Activated T-helper 1 cell treated with anti-CD3 and anti-CD28 coated beads, Interleukin-12 subunit alpha, Interleukin-12 subunit beta, Interleukin-2, Interleukin-4 antibody, amounts not matched to agents 30 ng/mL and 10 ng/mL and 1 ng/mL, durations not matched to agents 14 hours and 24 hours and 36 hours (primary cell): ENCODE measurements at regions of chr9 and their contacts with region 1.

Region 1: GRCh38 chr9:93159601-93160471 is 24.1 kb upstream of the WNK2 start:
- DNase-seq: peak; percentile 67
- H3K4me3 Mint-ChIP-seq: no peak overlapping the region
- H3K27ac Mint-ChIP-seq: no peak overlapping the region
- H3K4me1 Mint-ChIP-seq: peaks cover 25% of the 10 kb centered on the region
- H3K27me3 Mint-ChIP-seq: no peaks in the 10 kb centered on the region

Region 2: DNA sequence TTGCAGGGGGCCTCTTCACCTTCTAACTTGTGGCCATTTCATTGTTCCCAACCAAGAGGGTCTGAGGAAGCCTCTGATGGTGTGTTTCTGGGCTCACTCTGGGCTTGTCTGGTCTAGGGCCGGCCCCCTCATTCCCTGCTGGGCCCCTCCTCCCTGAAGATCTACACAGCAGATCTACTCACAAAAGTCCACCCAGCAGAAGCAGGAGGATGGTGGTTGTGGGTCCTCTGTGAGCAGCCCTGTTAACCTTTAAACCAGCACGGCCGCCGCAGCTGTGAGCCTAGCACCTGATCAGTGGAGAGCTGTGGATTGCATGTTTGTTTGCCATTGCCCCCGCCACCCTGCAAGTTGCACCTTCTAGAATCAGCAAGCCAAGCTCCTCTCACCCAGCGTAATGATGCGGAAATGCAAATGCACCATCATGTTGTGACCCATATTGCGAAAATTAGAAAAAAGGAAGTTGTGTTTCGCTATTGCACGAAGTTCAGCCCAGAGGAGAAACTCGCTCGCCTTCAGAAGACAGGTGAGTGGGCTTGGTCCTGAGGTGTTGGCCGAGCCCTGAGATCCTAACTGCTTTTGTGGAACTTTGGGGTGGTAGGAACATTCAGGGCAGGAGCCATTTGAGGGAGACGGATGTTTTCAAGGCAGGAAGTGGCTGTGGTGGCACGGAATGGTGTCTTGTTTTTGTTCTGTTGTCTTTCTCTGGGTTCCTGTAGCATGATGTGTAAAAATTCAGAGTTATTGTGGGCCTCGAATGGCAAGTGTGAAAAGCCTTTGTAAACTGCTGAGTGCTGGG is 195.8 kb before region 1 on chr9:
- intact Hi-C with region 1: loop called (anchors 5 kb)
- DNase-seq: peak; percentile 77
- H3K4me3 Mint-ChIP-seq: peak overlapping the region; percentile 98
- H3K27ac Mint-ChIP-seq: peak overlapping the region; percentile 97
- H3K4me1 Mint-ChIP-seq: peaks cover 69% of the 10 kb centered on the region
- H3K27me3 Mint-ChIP-seq: no peaks in the 10 kb centered on the region

Region 3: DNA sequence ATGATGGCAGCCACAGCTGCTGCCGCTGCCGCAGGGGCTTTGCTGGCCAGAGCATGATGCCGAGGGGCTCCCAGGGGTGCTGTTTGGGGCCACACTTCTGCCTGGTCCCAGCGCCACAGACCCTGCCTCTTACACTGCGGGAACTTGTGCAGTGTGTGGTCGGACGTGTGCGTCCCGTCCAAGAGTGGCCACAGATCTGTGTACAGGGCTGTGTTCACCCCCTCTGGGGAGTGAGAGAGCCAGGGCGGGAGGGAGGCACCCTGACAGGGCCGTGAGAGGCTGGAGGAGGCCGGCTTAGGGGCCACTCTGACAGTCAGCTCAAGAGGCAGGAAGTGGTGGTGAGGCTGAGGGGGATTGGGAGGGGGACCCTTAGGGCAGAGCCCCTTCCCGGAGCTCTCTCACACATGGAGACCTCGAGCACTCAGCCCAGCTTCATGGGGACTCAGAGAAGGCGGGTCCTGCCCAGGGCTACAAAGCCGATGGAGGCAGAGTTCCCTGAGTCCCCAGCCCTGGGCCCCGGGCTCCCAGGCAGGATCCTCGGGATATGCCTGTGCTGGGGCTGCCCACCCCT is 76.9 kb before region 1 on chr9:
- intact Hi-C with region 1: no loop called
- DNase-seq: no peak
- H3K4me3 Mint-ChIP-seq: no peak overlapping the region
- H3K27ac Mint-ChIP-seq: peak overlapping the region; percentile 58
- H3K4me1 Mint-ChIP-seq: peaks cover 26% of the 10 kb centered on the region
- H3K27me3 Mint-ChIP-seq: no peaks in the 10 kb centered on the region

Region 4: DNA sequence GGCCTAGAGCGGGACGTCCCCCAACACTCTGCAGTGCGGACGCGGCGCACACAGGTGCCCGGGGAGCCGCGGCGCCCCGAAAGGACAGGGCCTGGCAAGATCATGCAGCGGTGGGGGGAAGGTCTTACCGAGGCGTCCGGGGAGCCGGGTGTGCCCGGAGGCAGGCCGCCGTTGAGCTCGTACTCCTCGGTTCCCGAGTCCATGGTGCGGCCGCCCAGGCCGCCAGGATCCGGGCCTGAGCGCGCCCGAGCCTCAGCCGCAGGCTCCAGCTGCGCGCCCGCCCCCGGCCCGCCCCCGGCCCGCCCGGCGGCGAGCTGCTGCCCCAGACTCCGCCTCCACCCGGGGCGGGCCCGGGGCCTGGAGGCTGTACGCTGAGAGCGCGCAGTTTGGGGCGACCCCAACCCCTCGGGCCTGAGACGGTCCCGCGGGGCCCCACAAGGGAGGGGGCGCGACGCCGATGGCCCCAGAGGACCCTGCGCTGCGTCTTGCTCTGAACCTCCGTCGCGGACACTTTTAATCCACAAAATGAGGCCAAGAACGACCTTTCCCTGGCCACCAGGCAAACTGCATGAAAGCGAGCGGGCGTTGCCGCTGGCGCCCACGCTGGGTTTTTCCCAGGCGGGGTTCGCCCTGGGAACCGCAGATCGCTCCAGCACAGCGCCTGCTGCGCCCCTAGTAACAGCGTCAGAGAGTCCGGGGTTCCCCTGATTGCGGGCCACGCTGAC is 25.7 kb before region 1 on chr9 and contains the start of gene NINJ1:
- intact Hi-C with region 1: loop called (anchors 1 kb)
- DNase-seq: peak; percentile 89
- H3K4me3 Mint-ChIP-seq: peak within 1 kb of the TSS; percentile 94
- H3K27ac Mint-ChIP-seq: peak within 1 kb of the TSS; percentile 96
- H3K4me1 Mint-ChIP-seq: peaks cover 57% of the 10 kb centered on the region
- H3K27me3 Mint-ChIP-seq: peaks cover 2% of the 10 kb centered on the region
- total RNA-seq, gene NINJ1: 94.2 and 95.3 TPM in 2 replicates

Region 5: DNA sequence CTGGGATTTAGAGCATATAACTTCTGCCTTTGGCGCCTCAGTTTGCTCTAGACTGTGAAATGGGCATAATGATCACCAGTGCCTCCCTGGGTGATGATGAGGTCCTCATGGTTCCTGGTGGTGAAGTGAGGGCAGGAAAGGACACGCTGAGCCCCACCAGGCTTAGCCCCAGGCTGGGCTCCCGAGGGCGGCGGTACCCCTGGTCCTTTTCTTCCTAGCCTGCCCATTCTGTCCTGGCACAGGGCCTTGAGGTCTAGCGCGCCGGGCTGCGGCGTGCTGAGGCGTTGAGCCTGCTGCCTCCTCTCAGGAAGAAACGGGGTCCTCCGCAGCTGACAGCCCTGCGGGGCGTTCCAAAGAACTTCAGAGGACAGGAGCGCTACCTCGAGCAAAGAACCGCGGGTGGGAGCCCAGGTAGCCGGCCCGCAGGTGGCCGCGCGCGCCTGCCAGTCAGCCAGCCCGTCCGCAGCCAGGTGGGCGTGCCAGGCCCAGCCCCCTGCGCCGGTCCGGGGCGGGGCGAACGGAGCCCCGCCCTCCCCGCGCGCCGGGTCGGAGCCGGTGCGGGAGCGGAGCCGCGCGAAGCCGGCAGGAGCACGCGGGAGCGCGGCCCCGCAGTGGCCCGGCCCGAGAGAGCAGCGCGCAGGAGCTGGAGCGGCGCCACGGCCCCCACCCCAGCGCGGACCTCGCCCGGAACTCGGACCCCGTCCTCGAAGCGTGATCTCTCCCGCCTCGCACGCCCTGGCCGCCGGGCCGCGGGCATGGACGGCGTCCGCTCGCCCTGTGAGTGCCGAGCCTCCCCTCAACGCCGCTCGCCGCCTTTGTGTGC is 24.0 kb after region 1 on chr9 and contains the start of gene WNK2:
- intact Hi-C with region 1: loop called (anchors 2 kb)
- DNase-seq: peak; percentile 36
- H3K4me3 Mint-ChIP-seq: peak within 1 kb of the TSS; percentile 75
- H3K27ac Mint-ChIP-seq: no peak within 1 kb of the TSS
- H3K4me1 Mint-ChIP-seq: no peaks in the 10 kb centered on the region
- H3K27me3 Mint-ChIP-seq: peaks cover 61% of the 10 kb centered on the region
- total RNA-seq, gene WNK2: 2.2 and 3.0 TPM in 2 replicates

Region 6: GRCh38 chr9:93566408-93567270 is 406.8 kb after region 1 on chr9:
- intact Hi-C with region 1: loop called (anchors 1 kb)
- DNase-seq: peak; percentile 99
- H3K4me3 Mint-ChIP-seq: peak overlapping the region; percentile 85
- H3K27ac Mint-ChIP-seq: peak overlapping the region; percentile 87
- H3K4me1 Mint-ChIP-seq: peaks cover 22% of the 10 kb centered on the region
- H3K27me3 Mint-ChIP-seq: no peaks in the 10 kb centered on the region